HepG2 (cell line): ENCODE measurements at regions of chr6 and their contacts with region 1.

Region 1: GRCh38 chr6:166342349-166343149 is at the start of gene SFT2D1:
- DNase-seq: peak; percentile 77
- ATAC-seq: peak; percentile 97
- H3K4me3 ChIP-seq: peak within 1 kb of the TSS; percentile 89 to 99 (median 98)
- H3K27ac ChIP-seq: peak within 1 kb of the TSS; percentile 80
- H3K4me1 ChIP-seq: peaks cover 78% of the 10 kb centered on the region
- H3K27me3 ChIP-seq: no peaks in the 10 kb centered on the region; a peak in 1 of 5 replicates
- CTCF ChIP-seq: peak; percentile 29
- EP300 ChIP-seq: peak; percentile 4 to 20; a peak in 2 of 4 replicates
- POLR2A ChIP-seq: peak; percentile 94 to 98
- RAD21 ChIP-seq: peak; percentile 32; the same call in 1 of the 2 replicates
- total RNA-seq, gene SFT2D1: 90.7 and 115 TPM in 2 replicates

Region 2: DNA sequence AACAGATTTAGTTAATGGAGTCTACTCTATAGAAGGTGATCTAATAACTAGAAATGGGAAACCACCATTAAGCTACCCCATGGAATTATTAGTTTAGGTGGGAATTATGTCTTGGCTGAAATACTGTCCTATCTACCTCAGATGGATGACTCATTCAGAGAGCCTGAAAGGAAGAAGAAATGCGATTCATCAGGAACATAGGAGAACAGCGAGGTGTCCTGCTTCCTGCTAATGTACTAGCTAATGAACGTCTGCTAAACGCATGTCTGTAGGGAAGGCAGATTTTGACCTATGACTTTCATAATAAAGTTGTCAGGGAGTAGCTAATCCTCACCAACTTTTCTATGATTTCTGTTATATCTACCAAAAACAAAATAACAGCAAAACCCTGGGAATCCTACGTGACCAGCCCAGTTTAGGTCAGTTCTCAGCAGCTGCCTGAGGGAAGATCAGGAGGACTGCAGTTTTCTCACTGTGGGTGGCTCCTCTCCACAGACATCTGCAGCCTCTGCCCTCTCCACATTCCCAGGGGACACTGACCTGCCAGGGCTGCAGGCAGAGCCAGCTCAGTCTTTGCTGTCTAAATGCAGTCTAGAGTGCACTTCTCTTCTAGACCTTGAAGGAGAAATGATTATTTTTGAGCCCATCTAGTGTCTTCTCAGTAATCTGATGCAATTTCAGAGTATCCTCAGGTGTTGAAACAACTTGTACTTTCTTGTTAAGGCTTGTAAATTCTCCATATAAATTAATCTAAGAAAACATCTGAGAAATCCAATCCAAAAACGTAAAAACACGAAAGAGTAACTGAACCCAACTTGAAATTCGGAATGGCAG is 17.9 kb after region 1 on chr6:
- CTCF ChIA-PET with region 1: no interaction called
- POLR2A ChIA-PET with region 1: interaction called, 24 read pairs
- in situ Hi-C with region 1: no loop called
- intact Hi-C with region 1: loop called (anchors 1 kb)
- DNase-seq: no peak
- ATAC-seq: peak; percentile 76
- H3K4me3 ChIP-seq: peak overlapping the region; percentile 6 to 59 (median 32); a peak in 4 of 6 replicates
- H3K27ac ChIP-seq: peak overlapping the region; percentile 86
- H3K4me1 ChIP-seq: peaks cover 32% of the 10 kb centered on the region
- H3K27me3 ChIP-seq: no peaks in the 10 kb centered on the region
- CTCF ChIP-seq: no peak
- EP300 ChIP-seq: no peak
- POLR2A ChIP-seq: peak in 1 of 2 experiments; percentile 0; a peak in 1 of 4 replicates
- RAD21 ChIP-seq: no peak